ENCODE measurements at regions of chr5 and their contacts with region 1.

Region 1: DNA sequence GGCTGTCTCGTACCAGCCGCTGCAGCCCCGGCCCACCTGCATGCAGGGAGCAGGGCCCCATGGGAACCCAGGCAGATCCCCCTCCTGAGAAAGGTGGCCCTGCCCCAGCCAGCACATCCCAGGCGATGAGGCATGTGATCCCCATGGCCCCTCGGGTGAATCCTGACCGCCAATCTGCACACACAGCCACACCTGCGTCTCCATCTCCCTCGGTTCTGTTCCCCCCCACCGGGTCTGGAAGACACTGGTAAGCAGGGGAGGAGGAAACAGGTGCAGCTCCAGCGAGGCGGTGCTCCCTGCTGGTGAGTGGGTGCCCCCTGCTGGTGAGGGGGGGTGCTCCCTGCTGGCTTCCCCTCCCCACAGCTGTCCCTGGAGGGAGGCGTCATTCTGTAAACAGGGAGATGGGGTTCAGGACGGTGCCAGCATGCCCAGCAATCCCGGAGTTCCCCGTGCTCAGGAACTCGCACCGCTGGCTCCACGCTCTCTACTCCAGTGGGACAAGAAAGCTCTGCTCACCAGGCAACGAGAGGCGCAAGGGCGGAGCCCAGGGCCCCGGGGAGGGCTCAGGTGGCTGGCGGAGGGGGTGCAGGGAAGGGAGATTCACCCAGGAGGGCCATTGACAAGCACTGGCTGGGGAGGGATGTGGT is 28.4 kb upstream of the SLC12A7 start:
- DNase-seq: peak; percentile 92
- H3K4me3 Mint-ChIP-seq: no peak overlapping the region
- H3K27ac Mint-ChIP-seq: peak overlapping the region; percentile 8
- H3K4me1 Mint-ChIP-seq: peaks cover 12% of the 10 kb centered on the region
- H3K27me3 Mint-ChIP-seq: peaks cover 47% of the 10 kb centered on the region

Region 2: DNA sequence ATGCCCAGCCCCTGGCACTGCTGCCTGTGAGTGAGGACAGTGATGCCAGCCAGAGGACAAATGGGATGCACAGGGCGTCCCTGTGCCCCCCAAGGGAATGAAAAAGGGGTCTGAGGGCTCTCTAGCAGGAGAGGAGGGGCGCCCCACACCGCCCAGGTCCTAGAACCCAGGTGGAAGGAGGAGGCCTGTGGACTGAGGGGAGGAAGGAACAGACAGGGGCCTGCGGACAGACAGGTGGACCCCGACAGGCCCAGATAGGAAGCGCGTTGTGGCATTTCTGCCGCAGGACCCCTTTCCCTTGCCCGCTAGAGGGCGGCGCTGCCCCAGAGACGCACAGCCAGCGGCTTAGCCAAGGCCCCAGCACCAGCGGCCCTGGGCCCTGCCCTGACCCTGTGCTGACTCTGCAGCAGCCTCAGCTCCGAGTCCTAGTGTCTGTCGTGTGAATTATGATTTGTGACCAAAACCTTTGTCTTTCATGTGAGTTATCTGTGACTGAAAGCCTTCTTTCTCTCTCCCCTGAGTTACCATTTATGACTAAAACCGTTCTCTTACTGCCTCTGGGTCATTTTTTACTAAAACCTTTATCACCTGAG is 216.9 kb before region 1 on chr5:
- CTCF ChIA-PET with region 1: interaction called, 41 read pairs
- DNase-seq: peak; percentile 86
- H3K4me3 Mint-ChIP-seq: no peak overlapping the region
- H3K27ac Mint-ChIP-seq: no peak overlapping the region
- H3K4me1 Mint-ChIP-seq: peaks cover 13% of the 10 kb centered on the region
- H3K27me3 Mint-ChIP-seq: peaks cover 25% of the 10 kb centered on the region

Region 3: DNA sequence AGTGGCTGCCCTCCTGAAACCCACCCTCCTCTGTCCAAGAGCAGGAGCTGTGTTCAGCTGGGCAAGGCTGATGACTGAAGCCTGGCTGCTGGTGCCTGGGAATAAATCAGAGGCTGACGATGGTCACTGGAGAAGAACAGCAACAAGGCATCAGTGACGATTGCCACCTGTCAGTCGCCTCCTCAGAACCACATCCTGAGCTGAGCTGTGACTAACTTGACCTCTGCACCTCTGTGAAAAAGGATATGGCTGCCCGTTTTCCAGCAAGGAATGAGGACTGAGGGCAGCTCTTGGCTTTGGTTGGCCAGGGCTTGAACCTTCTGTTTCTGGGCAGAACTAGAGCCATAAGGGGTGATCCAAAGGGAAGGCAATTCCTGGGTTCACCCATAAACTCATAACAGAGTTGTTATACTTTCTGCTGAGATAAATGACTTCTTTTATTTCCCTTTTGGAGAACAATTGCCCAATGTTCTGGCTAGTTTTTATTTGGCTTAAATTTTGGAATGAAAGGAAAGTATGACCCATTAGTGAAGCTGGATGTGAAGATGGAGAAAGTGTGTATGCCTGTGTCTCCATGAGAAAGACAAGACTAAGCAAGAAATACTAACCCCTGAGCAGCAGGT is 207.6 kb before region 1 on chr5:
- CTCF ChIA-PET with region 1: interaction called, 13 read pairs
- DNase-seq: no peak
- H3K4me3 Mint-ChIP-seq: no peak overlapping the region
- H3K27ac Mint-ChIP-seq: no peak overlapping the region
- H3K4me1 Mint-ChIP-seq: peaks cover 15% of the 10 kb centered on the region
- H3K27me3 Mint-ChIP-seq: peaks cover 22% of the 10 kb centered on the region

Region 4: DNA sequence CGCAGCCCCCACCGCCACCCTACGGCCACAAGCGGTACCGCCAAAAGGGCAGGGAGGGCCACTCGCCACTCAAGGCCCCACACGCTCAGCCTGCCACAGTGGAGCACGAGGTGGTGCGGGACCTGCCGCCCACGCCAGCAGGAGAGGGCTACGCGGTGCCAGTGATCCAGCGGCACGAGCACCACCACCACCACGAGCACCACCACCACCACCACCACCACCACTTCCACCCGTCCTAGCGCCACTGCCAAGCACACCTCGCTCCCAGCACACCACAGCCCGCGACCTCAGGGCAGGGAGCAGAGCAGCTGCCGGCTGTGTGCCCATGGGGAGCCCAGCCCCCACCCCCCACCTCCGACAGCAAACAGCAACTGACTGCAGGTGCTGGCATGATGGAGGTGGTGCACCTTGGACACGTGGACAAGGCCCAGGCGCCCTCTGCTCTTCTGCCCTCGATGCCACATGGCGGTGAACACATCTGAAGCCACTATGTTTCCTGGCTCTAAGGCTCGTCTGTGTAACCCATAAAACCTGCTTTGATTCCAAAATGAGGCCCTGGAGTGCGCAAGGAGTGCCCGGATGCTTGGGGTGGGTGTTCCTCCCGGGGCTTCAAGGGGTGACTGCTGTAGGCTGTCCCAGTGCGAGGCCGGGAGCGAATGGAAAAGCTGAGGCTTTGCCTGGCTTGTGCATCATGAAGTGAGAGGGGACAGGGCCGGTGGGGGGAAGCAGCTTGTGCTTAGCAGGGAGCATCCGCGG is 102.0 kb before region 1 on chr5:
- CTCF ChIA-PET with region 1: no interaction called
- DNase-seq: no peak
- H3K4me3 Mint-ChIP-seq: no peak overlapping the region
- H3K27ac Mint-ChIP-seq: no peak overlapping the region
- H3K4me1 Mint-ChIP-seq: no peaks in the 10 kb centered on the region
- H3K27me3 Mint-ChIP-seq: peaks cover 3% of the 10 kb centered on the region

Region 5: DNA sequence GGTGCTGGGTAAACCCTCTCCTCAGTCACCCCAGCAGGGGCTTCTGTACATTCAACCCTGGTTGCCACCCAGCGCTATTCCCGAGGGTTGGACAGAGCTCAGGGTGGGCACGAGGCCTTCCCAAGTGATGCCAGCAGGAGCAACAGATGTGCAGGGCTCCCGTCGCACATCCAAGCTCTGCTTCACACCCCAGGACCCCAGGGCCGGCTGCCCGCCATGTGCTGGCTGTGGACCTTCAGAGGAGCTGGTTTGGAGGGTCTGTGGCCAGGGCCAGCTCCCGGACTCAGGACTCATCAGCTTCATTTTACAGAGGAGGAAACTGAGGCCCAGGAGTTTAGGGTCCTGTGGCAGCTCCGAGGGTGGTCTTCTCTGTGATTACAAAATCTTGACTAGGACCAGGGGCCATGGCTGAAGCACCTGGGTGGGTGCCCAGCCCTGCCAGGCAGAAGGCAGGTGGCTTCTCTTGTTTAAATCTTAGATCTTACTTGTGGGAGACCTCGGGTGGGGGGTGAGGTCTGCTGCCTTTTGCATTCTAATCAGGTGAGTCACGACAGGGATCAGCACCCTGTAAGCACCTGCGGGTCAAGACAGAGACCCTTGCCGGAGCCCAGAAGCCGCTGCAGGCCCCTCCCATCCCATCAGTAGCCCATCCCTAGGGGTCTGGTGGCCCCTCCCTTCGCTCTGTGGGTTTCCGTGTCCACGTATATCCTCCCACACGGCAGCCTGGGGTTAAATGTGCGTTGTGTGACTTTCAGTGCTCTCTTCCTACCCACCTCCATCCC is 26.3 kb before region 1 on chr5:
- CTCF ChIA-PET with region 1: no interaction called
- DNase-seq: no peak
- H3K4me3 Mint-ChIP-seq: peak overlapping the region; percentile 68
- H3K27ac Mint-ChIP-seq: no peak overlapping the region
- H3K4me1 Mint-ChIP-seq: peaks cover 20% of the 10 kb centered on the region
- H3K27me3 Mint-ChIP-seq: peaks cover 58% of the 10 kb centered on the region

Region 6: GRCh38 chr5:1152156-1152555 is 11.9 kb after region 1 on chr5:
- CTCF ChIA-PET with region 1: interaction called, 10 read pairs
- DNase-seq: no peak
- H3K4me3 Mint-ChIP-seq: no peak overlapping the region
- H3K27ac Mint-ChIP-seq: no peak overlapping the region
- H3K4me1 Mint-ChIP-seq: peaks cover 4% of the 10 kb centered on the region
- H3K27me3 Mint-ChIP-seq: peaks cover 64% of the 10 kb centered on the region

Measured in activated naive CD4-positive, alpha-beta T cell treated with anti-CD3 and anti-CD28 coated beads, Interleukin-2, amount 10 ng/mL, durations not matched to agents 7 days and 5 days (primary cell).